ENCODE measurements at regions of chr13 and their contacts with region 1.

Region 1: DNA sequence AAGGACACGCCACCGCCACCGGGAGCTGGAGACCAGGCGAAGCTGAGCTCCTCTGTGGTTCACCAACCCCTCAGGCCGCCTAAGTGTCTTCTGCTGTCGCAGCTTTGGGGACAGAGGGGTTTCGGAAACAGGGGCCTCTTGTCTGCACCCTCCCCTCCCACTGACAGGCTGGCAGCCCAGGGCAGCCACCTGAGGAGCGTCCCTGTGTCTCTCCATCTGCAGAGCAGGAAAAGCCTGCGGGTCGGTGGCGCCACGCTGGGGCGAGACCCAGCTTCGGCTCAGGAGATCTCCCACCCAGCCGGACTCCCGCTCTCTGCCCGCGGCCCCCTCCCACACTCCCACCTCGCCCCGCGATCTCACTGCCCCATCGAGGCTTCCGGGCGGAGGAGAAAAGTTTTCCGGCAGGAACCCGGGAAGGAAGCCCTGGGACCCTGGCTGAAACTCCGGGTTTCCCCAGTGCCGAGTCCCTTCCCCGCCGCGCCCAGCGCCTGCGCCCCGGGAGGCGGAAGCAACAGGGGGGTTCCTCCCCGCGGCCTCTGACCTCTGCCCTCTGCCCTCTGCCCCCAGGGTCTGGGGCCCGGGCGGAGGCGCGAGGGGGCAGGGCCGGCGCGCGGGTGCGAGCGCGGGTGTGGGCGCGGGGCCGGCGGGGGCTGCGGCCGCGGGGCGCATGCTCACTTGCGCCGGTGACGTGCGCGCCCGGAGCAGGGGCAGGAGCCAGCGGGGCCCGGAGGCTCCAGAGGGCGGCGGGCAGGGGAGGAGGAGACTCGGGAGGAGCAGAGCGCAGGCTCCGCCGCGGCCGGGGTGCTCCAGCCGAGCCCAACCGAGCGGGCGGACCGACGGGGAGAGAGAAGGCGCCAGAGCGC is at the start of gene ATP11A:
- DNase-seq: peak; percentile 98
- total RNA-seq, gene ATP11A: 52.4 to 55.5 TPM

Region 2: DNA sequence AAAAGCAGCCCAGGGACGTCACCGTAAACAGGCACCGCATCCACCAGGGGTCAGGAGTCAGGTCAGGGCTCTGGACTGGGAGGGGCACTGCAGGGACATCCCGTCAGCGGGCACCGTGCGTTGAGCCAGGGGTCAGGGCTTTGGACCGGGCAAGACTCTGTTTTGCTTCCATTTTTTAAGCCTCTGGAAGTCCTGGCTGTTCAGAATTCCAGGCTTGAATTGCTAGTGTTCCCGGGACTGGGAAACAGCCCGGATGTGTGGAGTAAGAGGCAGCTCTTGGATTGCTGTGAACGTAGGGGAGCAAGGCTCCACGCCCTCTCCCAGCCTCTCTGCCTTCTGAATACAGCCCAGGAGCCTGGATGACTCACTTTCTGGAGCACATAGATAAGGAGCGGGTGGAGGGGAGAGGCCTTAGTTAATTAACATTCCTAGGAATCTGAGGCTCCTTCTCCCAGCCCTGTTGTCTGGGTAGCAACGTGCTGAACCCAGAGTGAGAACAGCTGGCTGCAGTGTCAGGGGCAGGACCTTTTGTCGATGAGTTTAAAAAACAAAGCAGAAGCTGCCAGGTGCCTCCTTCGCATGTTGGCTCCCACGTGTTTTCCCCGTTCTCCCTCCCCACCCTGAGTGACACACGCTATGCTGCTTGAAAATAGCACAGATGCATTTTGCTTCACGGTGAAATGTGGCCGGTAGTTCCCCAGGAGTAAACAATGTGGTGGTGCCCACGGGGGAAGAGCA is 22.2 kb after region 1 on chr13:
- intact Hi-C with region 1: loop called in 1 of 2 experiments (anchors 2 kb)
- DNase-seq: peak; percentile 94

Measured in posterior vena cava (tissue), 2 donors.